HepG2 (cell line): ENCODE measurements at regions of chr16 and their contacts with region 1.

Region 1: GRCh38 chr16:25051406-25052150 is 36.4 kb upstream of the ARHGAP17 start:
- DNase-seq: no peak
- ATAC-seq: no peak
- H3K4me3 ChIP-seq: peak overlapping the region in 2 of 3 experiments; percentile 14 to 23; a peak in 1 of 6 replicates
- H3K27ac ChIP-seq: no peak overlapping the region
- H3K4me1 ChIP-seq: peaks cover 40% of the 10 kb centered on the region
- H3K27me3 ChIP-seq: peaks cover 0 to 5% of the 10 kb centered on the region in 2 experiments; a peak in 2 of 5 replicates
- CTCF ChIP-seq: no peak
- EP300 ChIP-seq: no peak
- POLR2A ChIP-seq: no peak
- RAD21 ChIP-seq: no peak

Region 2: DNA sequence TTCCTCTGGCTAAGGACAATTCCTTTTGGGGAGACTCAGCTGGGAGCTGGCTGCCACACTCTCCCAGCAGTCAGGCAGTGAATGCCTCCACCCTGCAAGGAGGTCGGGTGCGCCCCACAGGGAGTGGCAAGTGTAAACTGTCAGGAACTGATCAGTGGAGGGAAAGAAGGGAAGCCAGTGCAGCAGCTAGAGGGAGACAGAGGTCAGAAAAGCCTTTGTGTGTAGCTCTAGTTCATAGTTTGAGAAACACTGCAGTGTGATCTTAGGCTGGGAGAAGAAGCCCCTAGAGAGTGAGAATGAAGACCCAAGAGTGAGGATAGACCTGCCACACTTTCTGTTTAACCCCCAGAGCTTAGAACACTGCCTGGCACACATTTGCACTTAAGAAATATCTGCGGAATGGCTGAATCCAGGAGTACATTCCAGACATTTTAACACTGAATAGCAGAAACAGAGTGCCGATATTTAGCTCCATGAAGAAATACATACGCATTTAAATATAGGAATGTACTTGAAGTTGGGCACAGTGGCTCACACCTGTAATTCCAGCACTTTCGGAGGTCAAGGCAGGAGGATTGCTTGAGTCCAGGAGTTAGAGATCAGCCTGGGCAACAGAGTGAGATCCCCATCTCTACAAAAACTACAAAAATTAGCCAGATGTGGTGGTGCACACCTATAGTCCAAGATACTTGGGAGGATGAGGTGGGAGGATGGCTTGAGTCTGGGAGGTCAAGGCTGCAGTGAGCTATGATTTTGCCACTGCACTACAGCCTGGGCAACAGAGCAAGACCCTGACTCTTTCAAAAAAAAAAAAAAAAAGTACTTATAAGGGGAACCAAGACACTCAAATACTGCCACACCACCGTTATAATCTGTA is 216.9 kb before region 1 on chr16:
- CTCF ChIA-PET with region 1: no interaction called
- POLR2A ChIA-PET with region 1: no interaction called
- in situ Hi-C with region 1: no loop called
- intact Hi-C with region 1: loop called (anchors 10 kb)
- DNase-seq: peak; percentile 62
- ATAC-seq: peak; percentile 81
- H3K4me3 ChIP-seq: no peak overlapping the region
- H3K27ac ChIP-seq: no peak overlapping the region
- H3K4me1 ChIP-seq: peaks cover 29% of the 10 kb centered on the region
- H3K27me3 ChIP-seq: no peaks in the 10 kb centered on the region
- CTCF ChIP-seq: peak; percentile 91
- EP300 ChIP-seq: no peak
- POLR2A ChIP-seq: no peak
- RAD21 ChIP-seq: peak; percentile 82

Region 3: GRCh38 chr16:25006469-25007055 is 45.0 kb before region 1 on chr16:
- CTCF ChIA-PET with region 1: no interaction called
- POLR2A ChIA-PET with region 1: no interaction called
- in situ Hi-C with region 1: no loop called
- intact Hi-C with region 1: no loop called
- DNase-seq: peak; percentile 78
- ATAC-seq: peak; percentile 94
- H3K4me3 ChIP-seq: no peak overlapping the region; a peak in 1 of 6 replicates
- H3K27ac ChIP-seq: peak overlapping the region; percentile 49
- H3K4me1 ChIP-seq: peaks cover 54% of the 10 kb centered on the region
- H3K27me3 ChIP-seq: no peaks in the 10 kb centered on the region
- CTCF ChIP-seq: no peak
- EP300 ChIP-seq: no peak
- POLR2A ChIP-seq: no peak
- RAD21 ChIP-seq: no peak

Region 4: DNA sequence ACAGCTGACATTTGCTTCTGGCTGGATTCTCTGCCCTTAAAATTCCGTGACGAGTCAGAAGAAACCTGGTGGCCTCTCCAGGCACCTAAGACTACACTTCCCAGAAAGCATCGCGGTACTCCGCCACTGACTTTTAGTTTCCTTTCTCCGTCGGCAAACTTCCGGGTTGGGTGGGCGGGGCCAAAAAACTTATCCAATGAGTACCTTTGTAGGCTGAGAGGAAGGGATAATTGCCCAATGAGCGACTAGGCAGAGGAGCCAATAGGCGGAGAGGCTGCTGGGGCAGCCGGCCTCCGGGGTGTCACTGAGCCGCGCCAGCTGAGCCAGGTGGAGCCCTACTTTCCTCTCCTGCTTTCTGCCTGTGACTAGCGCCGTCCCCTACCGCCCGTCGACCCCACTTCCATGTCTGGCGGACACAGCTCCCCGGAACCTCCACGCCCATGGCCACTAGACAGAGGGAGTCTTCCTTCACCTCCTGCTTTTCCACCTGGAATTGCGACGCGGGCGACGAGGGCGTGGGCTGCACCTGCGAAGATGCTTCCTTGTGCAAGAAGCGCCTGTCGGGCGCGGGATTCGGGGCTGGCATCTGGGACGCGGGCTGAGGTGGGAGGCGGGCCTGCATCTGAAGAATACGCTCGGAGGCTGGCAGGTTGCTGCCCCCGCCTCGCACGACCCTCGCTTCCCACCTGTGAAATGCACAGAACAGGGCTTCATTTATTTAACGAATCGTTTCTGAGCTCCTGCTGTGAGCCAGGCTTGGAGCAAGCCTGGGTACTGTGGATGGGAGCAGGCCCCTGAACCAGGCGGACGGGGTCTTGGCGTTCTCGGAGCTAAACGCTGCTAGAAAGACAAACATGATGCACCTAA is 19.9 kb before region 1 on chr16:
- CTCF ChIA-PET with region 1: no interaction called
- POLR2A ChIA-PET with region 1: no interaction called
- in situ Hi-C with region 1: no loop called
- intact Hi-C with region 1: loop called (anchors 1 kb)
- DNase-seq: peak; percentile 99
- ATAC-seq: peak; percentile 99
- H3K4me3 ChIP-seq: peak overlapping the region; percentile 80 to 85 (median 84)
- H3K27ac ChIP-seq: peak overlapping the region; percentile 31
- H3K4me1 ChIP-seq: peaks cover 48% of the 10 kb centered on the region
- H3K27me3 ChIP-seq: peaks cover 0 to 11% of the 10 kb centered on the region in 2 experiments; a peak in 4 of 5 replicates
- CTCF ChIP-seq: peak; percentile 42
- EP300 ChIP-seq: 0 out of 4 replicates have a peak, but pooled peaks of 1 of the 2 experiments have one; percentile 44
- POLR2A ChIP-seq: peak; percentile 77 to 90
- RAD21 ChIP-seq: peak; percentile 29

Region 5: GRCh38 chr16:25106567-25107465 is 55.2 kb after region 1 on chr16:
- CTCF ChIA-PET with region 1: interaction called, 3 read pairs
- POLR2A ChIA-PET with region 1: interaction called, 6 read pairs
- in situ Hi-C with region 1: no loop called
- intact Hi-C with region 1: loop called (anchors 2 kb)
- DNase-seq: peak; percentile 90
- ATAC-seq: peak; percentile 86
- H3K4me3 ChIP-seq: peak overlapping the region; percentile 69 to 95 (median 84)
- H3K27ac ChIP-seq: peak overlapping the region; percentile 50
- H3K4me1 ChIP-seq: peaks cover 39% of the 10 kb centered on the region
- H3K27me3 ChIP-seq: no peaks in the 10 kb centered on the region; a peak in 1 of 5 replicates
- CTCF ChIP-seq: peak; percentile 93
- EP300 ChIP-seq: peak in 1 of 2 experiments; percentile 30; a peak in 1 of 4 replicates
- POLR2A ChIP-seq: peak; percentile 90 to 96
- RAD21 ChIP-seq: peak; percentile 62

Region 6: DNA sequence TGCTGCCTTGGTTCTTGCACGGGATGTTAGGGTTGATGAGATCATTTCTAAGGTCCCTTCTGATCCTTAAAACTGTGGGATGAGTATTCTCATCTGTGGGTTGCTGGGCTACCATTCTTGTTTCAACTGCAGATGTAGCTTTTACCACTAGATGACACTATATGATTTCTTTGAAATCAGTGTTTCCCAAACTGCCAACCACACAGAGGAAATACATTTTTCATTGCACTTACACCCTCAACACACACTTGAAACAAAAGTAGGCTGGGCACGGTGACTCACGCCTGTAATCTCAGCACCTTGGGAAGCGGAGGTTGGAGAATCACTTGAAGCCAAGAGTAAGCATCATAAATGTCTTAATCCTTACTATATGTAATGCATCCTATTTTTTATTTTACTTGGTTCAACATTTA is 75.2 kb after region 1 on chr16:
- CTCF ChIA-PET with region 1: no interaction called
- POLR2A ChIA-PET with region 1: no interaction called
- in situ Hi-C with region 1: no loop called
- intact Hi-C with region 1: loop called (anchors 1 kb)
- DNase-seq: peak; percentile 35
- ATAC-seq: peak; percentile 80
- H3K4me3 ChIP-seq: no peak overlapping the region
- H3K27ac ChIP-seq: no peak overlapping the region
- H3K4me1 ChIP-seq: no peaks in the 10 kb centered on the region
- H3K27me3 ChIP-seq: no peaks in the 10 kb centered on the region
- CTCF ChIP-seq: peak; percentile 83
- EP300 ChIP-seq: no peak
- POLR2A ChIP-seq: no peak
- RAD21 ChIP-seq: peak; percentile 84

Region 7: GRCh38 chr16:25224731-25225319 is 173.2 kb after region 1 on chr16:
- CTCF ChIA-PET with region 1: interaction called, 13 read pairs
- POLR2A ChIA-PET with region 1: interaction called, 3 read pairs
- in situ Hi-C with region 1: loop called (anchors 5 kb)
- intact Hi-C with region 1: loop called (anchors 2 kb)
- DNase-seq: no peak
- ATAC-seq: no peak
- H3K4me3 ChIP-seq: no peak overlapping the region; a peak in 1 of 6 replicates
- H3K27ac ChIP-seq: no peak overlapping the region
- H3K4me1 ChIP-seq: peaks cover 60% of the 10 kb centered on the region
- H3K27me3 ChIP-seq: no peaks in the 10 kb centered on the region
- CTCF ChIP-seq: no peak
- EP300 ChIP-seq: no peak
- POLR2A ChIP-seq: no peak
- RAD21 ChIP-seq: no peak